Endothelial cell of umbilical vein (primary cell): ENCODE measurements at regions of chr2 and their contacts with region 1.

Region 1: DNA sequence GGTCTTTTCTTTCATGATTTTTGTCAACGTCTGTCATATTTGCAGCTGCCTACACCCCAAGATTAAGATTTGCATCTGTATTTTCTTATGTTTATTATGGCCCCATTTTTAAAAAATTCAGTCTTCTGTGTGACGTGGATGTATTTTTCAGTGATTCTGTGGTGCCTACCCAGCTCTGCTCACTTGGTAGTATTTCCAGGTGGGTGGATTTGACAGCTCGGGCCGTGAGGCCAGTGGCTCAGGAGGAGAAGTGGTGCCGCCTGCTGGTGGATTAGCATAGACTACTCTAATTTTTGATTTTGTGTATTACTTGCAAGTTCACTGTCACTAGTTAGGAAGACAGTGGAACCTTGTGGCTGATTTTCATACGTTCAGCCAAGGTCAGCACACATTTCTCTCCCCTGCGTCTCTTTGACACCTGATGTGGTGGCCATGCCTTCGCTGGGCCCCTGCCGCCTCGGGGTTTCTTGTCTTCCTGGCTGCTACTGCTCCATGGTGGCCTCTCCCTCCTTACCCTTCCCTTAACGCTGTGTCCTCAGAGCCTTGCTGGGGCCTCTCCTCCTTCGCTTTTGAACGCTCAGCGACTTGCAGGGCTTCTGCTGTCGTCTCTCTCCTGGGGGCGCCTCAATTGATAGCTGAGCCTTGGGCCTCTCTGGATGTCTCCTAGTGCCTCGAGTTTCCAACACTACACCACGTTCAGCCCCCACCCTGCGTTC is 89.3 kb downstream of the DGKD start:
- DNase-seq: peak; percentile 82
- H3K4me3 ChIP-seq: no peak overlapping the region
- H3K27ac ChIP-seq: no peak overlapping the region
- H3K4me1 ChIP-seq: no peaks in the 10 kb centered on the region
- H3K27me3 ChIP-seq: no peaks in the 10 kb centered on the region
- CTCF ChIP-seq: peak; percentile 75 to 86
- POLR2A ChIP-seq: no peak

Region 2: GRCh38 chr2:232611551-232612218 is 831.9 kb before region 1 on chr2:
- CTCF ChIA-PET with region 1: no interaction called
- POLR2A ChIA-PET with region 1: no interaction called
- dilution Hi-C with region 1: no loop called
- intact Hi-C with region 1: loop called (anchors 5 kb)
- DNase-seq: peak; percentile 19
- H3K4me3 ChIP-seq: no peak overlapping the region
- H3K27ac ChIP-seq: no peak overlapping the region
- H3K4me1 ChIP-seq: no peaks in the 10 kb centered on the region
- H3K27me3 ChIP-seq: no peaks in the 10 kb centered on the region
- CTCF ChIP-seq: peak; percentile 86 to 88
- POLR2A ChIP-seq: no peak

Region 3: GRCh38 chr2:233353769-233354499 is 89.7 kb before region 1 on chr2 and contains the start of gene DGKD:
- CTCF ChIA-PET with region 1: interaction called, 20 read pairs
- POLR2A ChIA-PET with region 1: no interaction called
- dilution Hi-C with region 1: no loop called
- intact Hi-C with region 1: loop called (anchors 1 kb)
- DNase-seq: peak; percentile 56
- H3K4me3 ChIP-seq: peak within 1 kb of the TSS; percentile 40 to 78 (median 59)
- H3K27ac ChIP-seq: peak within 1 kb of the TSS; percentile 19
- H3K4me1 ChIP-seq: peaks cover 23% of the 10 kb centered on the region
- H3K27me3 ChIP-seq: no peaks in the 10 kb centered on the region
- CTCF ChIP-seq: peak in 1 of 2 donors; percentile 26
- POLR2A ChIP-seq: no peak
- total RNA-seq, gene DGKD: 36.5 and 36.6 TPM in 2 replicates

Region 4: GRCh38 chr2:233413559-233414272 is 29.9 kb before region 1 on chr2:
- CTCF ChIA-PET with region 1: interaction called, 191 read pairs
- POLR2A ChIA-PET with region 1: no interaction called
- dilution Hi-C with region 1: no loop called
- intact Hi-C with region 1: no loop called
- DNase-seq: peak; percentile 80
- H3K4me3 ChIP-seq: no peak overlapping the region
- H3K27ac ChIP-seq: peak overlapping the region; percentile 71
- H3K4me1 ChIP-seq: peaks cover 32% of the 10 kb centered on the region
- H3K27me3 ChIP-seq: no peaks in the 10 kb centered on the region
- CTCF ChIP-seq: no peak
- POLR2A ChIP-seq: no peak

Region 5: DNA sequence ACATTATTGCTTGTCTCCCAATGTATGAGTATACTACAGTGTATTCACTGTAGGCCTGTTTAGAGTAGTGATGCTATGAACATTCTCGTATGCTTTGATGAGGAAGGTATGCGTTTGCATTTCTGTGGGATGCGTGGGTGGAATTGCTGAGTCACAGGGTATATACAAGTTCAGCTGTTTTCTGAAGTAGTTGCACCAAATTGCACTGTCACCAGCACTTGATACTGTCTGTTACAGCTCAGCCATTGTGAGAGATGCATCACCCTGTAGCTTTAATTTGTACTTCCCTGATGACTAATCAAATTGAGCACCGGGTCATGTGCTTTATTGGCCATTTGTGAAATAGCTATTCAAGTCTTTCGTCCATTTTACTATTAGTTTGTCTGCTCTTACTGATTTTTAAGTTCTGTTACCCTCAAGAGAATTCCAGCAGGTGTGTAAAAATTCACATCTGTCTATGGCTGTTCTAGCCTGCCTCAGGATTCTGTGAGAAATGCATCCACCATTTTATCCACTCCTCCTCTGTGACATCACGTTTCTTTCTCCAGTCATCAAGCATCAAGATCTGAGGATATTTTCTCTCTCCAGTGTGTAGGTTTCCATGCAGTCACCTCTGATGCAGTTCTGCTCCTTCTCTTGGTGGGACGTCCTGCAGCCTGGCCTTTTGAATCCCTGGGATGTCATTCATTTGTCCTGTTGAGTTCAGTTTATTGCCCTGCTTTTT is 16.8 kb before region 1 on chr2:
- CTCF ChIA-PET with region 1: interaction called, 26 read pairs
- POLR2A ChIA-PET with region 1: no interaction called
- dilution Hi-C with region 1: no loop called
- intact Hi-C with region 1: no loop called
- DNase-seq: no peak
- H3K4me3 ChIP-seq: no peak overlapping the region
- H3K27ac ChIP-seq: no peak overlapping the region
- H3K4me1 ChIP-seq: peaks cover 10% of the 10 kb centered on the region
- H3K27me3 ChIP-seq: no peaks in the 10 kb centered on the region
- CTCF ChIP-seq: no peak
- POLR2A ChIP-seq: no peak

Region 6: GRCh38 chr2:233832869-233833311 is 389.3 kb after region 1 on chr2:
- CTCF ChIA-PET with region 1: interaction called, 54 read pairs
- POLR2A ChIA-PET with region 1: no interaction called
- dilution Hi-C with region 1: no loop called
- intact Hi-C with region 1: no loop called
- DNase-seq: peak; percentile 30
- H3K4me3 ChIP-seq: no peak overlapping the region
- H3K27ac ChIP-seq: no peak overlapping the region
- H3K4me1 ChIP-seq: no peaks in the 10 kb centered on the region
- H3K27me3 ChIP-seq: no peaks in the 10 kb centered on the region
- CTCF ChIP-seq: peak in 1 of 2 donors; percentile 42
- POLR2A ChIP-seq: no peak